GM10248 (cell line): ENCODE measurements at regions of chr4 and their contacts with region 1.

Region 1: DNA sequence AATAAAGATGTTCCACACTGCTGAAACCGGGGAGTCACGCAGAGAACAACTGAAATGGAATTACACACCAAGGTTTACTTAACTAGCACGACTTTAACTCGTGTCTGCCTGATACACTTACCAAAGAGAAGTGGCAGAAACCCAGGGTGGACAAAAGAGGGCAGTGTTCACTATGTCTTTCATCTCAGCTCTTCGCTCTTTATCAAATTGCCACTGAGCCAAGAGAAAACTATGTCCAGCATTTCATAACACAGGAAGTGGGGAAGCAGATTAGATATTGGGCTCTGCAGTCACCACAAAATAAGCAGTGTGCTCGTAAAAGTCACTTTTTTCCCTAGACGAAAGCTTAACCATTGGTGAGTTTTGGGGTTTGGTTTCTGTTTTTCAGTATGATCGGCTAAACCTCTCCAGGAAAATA is 155.7 kb downstream of the CHIC2 start:
- DNase-seq: peak; percentile 35
- CTCF ChIP-seq: peak; percentile 62

Region 2: DNA sequence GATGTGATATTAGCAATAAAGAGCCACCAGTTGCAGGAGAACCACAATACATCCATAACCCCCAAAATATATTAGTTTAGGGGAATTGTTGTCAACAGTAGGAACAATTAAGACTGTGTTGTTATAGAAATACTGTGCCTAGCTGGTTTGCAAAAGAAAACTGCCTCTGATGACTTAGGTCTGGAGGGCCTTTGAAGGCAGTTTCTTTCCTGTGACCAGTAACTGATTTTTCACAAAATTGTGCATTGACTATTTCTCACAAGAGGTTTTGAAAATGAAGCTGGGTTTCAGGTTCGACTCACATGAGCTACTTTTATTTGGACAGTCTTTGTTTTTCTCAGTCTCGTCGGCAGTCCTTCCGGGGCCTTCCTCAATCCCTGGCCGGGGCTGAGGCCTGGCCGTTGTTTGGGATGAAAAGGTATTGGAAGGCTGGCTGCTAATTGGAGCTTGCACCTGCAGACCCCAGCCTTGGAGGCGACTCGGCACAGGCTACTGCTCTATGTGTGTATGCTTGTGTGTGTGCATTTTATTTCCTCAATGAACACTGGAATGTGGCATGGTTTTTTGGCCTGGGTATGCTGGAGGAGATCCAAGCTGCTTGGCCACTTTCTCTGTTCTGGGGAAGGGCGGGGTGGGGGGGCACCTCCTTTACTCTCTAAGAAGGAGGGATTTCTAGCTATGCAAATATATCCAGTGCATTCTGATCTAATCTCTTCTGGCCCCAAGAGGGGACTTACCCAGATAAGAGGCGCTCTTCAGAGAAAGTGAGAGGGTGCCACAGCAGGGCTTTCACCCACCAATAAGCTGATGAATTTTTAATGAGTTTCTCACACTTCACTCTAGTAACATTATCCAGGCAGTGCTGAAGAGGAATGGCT is 267.9 kb before region 1 on chr4:
- CTCF ChIA-PET with region 1: no interaction called
- POLR2A ChIA-PET with region 1: no interaction called
- DNase-seq: peak; percentile 20
- CTCF ChIP-seq: no peak

Region 3: DNA sequence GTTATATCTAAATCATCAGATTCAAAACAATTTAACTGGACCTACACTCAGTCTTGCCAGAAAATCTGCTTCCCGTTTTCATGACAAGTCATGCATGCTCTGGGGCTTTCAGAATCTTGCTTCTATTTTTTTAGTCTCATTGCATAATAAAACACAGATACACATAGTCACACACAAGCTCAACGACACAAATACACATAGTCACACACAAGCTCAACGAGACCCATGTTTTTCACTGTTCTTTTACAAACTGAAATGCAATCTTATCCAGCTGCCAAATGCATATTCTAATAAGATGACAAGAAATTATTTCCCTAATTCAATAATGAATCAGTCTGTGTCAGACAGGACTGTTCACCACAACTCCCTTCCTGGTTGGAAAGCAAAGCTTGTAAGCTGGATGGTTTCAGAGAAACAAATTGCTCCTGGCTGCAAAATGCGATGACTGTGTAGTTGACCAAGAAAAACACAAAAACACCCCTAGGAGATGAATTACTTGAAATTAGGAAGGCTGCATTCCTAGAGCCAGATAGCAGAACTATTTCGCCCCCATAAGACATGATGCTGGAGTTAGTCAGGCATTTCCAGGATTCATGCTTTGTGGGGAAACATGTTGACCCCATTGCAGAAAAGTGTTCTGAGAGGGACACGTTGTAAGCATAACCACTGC is 53.0 kb before region 1 on chr4:
- CTCF ChIA-PET with region 1: no interaction called
- POLR2A ChIA-PET with region 1: no interaction called
- DNase-seq: no peak
- CTCF ChIP-seq: no peak

Region 4: DNA sequence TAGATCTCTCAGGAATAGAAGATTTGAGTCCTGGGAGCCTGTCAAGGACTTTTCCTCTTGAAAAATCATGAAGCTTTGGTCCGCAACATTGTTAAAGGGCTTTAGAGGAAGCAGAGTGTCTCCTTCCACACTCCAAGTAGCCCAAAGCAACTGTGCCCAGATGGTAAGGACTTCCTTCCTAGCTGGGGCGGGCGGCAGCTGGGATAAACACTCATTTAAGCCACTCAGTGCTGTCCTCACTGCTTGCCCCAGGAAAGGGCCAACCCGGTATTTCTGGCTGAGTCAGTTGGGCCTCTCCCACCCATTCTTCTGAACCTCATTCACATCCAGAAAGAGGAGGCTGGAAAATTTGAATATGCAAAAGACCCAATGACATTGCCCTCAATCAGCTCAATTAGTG is 11.4 kb after region 1 on chr4:
- CTCF ChIA-PET with region 1: interaction called, 18 read pairs
- POLR2A ChIA-PET with region 1: no interaction called
- DNase-seq: no peak
- CTCF ChIP-seq: no peak

Region 5: GRCh38 chr4:53943345-53944085 is 34.8 kb after region 1 on chr4:
- CTCF ChIA-PET with region 1: no interaction called
- POLR2A ChIA-PET with region 1: no interaction called
- DNase-seq: no peak
- CTCF ChIP-seq: no peak

Region 6: DNA sequence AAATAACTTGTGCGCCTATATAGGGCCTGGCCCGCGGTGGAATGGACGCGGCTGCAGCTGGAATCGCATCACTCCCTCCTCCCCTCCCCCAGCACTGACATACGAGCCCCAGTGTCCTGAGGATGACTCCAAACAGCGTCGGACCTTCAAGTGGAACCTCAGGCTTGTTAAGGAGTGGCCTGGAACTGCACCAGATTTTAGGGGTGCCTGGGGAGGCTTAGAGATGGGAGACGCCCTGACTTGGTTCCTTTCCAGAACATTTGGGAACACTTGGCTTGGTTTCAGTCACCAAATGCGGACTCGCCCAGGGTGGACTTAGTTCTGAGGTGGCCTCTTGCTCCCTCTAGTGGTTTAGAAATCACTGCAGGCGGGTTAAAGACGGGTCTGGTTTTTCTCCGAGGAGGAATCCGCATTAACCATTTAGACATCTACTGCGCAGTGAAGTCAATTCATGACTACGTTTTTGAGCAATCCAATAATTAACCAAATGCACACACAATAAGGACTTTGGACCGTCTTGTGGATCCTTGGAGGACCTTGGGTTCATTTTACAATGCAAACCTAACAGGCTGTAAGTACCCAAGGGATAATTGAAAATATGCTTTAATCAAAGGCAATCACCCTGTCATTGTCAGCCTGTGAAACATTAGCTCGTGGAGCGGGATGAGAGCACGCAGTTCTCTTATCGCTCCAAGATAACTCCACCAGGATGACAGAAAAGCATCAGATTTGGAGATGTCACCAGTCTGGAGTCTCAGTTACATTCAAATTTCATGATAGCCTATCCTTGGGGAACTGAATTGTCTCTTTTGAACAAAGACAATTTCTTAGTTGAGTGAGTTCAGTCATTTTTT is 309.2 kb after region 1 on chr4:
- CTCF ChIA-PET with region 1: interaction called, 33 read pairs
- POLR2A ChIA-PET with region 1: no interaction called
- DNase-seq: peak; percentile 76
- CTCF ChIP-seq: peak; percentile 66